Adrenal gland (tissue), 19 donors: ENCODE measurements at regions of chr1 and their contacts with region 1.

Region 1: DNA sequence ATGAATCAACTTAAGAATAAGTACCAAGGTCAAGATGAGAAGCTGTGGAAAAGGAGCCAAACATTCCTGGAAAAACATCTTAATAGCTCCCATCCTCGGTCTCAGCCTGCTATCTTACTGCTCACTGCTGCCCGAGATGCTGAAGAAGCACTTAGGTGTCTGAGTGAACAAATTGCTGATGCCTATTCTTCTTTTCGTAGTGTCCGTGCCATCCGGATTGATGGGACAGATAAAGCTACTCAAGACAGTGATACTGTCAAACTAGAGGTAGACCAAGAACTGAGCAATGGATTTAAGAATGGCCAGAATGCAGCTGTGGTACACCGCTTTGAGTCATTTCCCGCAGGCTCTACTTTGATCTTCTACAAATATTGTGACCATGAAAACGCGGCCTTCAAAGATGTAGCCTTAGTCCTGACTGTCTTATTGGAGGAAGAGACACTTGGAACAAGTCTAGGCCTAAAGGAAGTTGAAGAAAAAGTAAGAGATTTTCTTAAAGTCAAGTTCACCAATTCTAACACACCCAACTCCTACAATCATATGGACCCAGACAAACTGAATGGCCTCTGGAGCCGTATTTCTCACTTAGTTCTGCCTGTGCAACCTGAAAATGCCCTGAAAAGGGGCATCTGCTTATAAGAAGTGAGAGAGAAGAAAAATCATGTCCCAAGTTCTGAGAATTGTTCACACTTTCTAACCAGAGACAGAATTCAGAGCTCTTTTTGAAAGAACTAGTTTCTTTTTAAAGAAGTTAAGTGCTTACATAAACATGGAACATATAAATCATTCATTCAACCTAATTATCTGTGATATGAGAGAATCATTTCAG is 35.7 kb downstream of the TOR1AIP1 start:
- DNase-seq: no peak
- H3K4me3 ChIP-seq: no peak overlapping the region
- H3K27ac ChIP-seq: no peak overlapping the region
- H3K4me1 ChIP-seq: peaks cover 0 to 14% of the 10 kb centered on the region in 2 donors
- H3K27me3 ChIP-seq: no peaks in the 10 kb centered on the region
- CTCF ChIP-seq: no peak
- POLR2A ChIP-seq: no peak

Region 2: GRCh38 chr1:179973198-179974110 is 55.6 kb after region 1 on chr1:
- intact Hi-C with region 1: no loop called
- DNase-seq: no peak
- H3K4me3 ChIP-seq: no peak overlapping the region
- H3K27ac ChIP-seq: no peak overlapping the region
- H3K4me1 ChIP-seq: peaks cover 32 to 67% of the 10 kb centered on the region in 2 donors
- H3K27me3 ChIP-seq: no peaks in the 10 kb centered on the region
- CTCF ChIP-seq: no peak
- POLR2A ChIP-seq: no peak

Region 3: DNA sequence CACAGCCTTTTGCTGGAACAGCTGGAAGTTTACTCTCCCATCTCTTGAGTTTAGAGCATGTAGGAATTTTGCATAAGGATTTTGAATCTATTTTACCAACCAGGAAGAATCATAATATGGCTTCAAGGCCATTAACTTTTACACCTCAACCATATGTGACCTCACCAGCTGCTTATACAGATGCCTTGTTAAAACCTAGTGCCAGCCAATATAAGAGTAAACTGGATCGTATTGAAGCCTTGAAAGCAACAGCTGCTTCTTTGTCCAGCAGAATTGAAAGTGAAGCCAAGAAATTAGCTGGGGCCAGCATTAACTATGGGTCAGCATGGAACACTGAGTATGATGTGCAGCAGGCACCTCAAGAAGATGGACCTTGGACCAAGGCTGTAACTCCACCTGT is 102.2 kb after region 1 on chr1:
- intact Hi-C with region 1: loop called in 1 of 2 experiments (anchors 10 kb)
- DNase-seq: no peak
- H3K4me3 ChIP-seq: no peak overlapping the region
- H3K27ac ChIP-seq: no peak overlapping the region
- H3K4me1 ChIP-seq: peaks cover 0 to 5% of the 10 kb centered on the region in 2 donors
- H3K27me3 ChIP-seq: no peaks in the 10 kb centered on the region
- CTCF ChIP-seq: no peak
- POLR2A ChIP-seq: no peak

Region 4: GRCh38 chr1:180213401-180214170 is 295.8 kb after region 1 on chr1:
- intact Hi-C with region 1: no loop called
- DNase-seq: no peak
- H3K4me3 ChIP-seq: no peak overlapping the region
- H3K27ac ChIP-seq: no peak overlapping the region
- H3K4me1 ChIP-seq: no peaks in the 10 kb centered on the region
- H3K27me3 ChIP-seq: peaks cover 10% of the 10 kb centered on the region
- CTCF ChIP-seq: no peak
- POLR2A ChIP-seq: no peak